MCF 10A (cell line): ENCODE measurements at regions of chr2 and their contacts with region 1.

Region 1: GRCh38 chr2:71798266-71799012 is 345.1 kb downstream of the DYSF start:
- DNase-seq: peak; percentile 61
- H3K4me3 Mint-ChIP-seq: no peak overlapping the region
- H3K27ac Mint-ChIP-seq: no peak overlapping the region
- H3K4me1 Mint-ChIP-seq: no peaks in the 10 kb centered on the region
- H3K27me3 Mint-ChIP-seq: no peaks in the 10 kb centered on the region
- CTCF ChIP-seq: peak; percentile 72

Region 2: GRCh38 chr2:71410696-71411095 is 387.7 kb before region 1 on chr2:
- CTCF ChIA-PET with region 1: no interaction called
- POLR2A ChIA-PET with region 1: no interaction called
- intact Hi-C with region 1: no loop called
- DNase-seq: no peak
- H3K4me3 Mint-ChIP-seq: no peak overlapping the region
- H3K27ac Mint-ChIP-seq: no peak overlapping the region
- H3K4me1 Mint-ChIP-seq: no peaks in the 10 kb centered on the region
- H3K27me3 Mint-ChIP-seq: no peaks in the 10 kb centered on the region
- CTCF ChIP-seq: no peak

Region 3: DNA sequence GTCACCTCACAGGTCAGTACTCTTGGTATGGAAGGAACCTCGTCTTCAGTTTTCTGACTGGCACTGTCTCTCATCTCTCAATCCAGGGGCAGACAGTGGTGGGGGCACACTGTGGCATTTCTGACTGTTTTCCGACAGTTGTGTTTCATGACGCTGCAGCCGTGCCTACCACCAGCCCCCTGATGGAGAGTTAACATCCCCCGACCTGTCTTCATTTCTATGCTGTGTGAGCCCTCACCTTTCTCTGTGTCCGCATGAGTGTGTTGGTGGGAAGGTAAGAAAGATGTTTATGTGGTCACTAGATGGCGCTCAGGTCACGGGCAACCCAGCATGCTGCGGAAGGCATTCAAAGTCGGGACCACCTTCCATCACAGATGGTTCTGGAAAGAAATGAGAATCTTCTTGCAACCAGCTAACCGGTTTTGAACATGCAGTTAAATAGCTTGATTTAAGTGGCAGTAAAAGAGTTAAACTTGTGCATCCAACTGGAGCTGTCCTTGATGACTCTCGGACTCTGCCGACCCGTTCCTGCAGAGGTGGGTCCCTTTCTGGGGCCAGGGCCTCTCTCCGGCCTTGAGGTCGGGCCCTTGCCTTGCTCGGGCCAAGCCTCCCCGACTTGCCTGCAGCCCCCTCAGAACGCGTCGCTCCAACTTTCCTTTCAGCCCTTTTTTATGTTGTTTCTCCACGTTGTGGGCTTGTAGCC is 252.7 kb before region 1 on chr2:
- CTCF ChIA-PET with region 1: interaction called, 28 read pairs
- POLR2A ChIA-PET with region 1: no interaction called
- intact Hi-C with region 1: loop called (anchors 1 kb)
- DNase-seq: peak; percentile 63
- H3K4me3 Mint-ChIP-seq: no peak overlapping the region
- H3K27ac Mint-ChIP-seq: no peak overlapping the region
- H3K4me1 Mint-ChIP-seq: peaks cover 5% of the 10 kb centered on the region
- H3K27me3 Mint-ChIP-seq: peaks cover 29% of the 10 kb centered on the region
- CTCF ChIP-seq: peak; percentile 83

Region 4: GRCh38 chr2:71609958-71610357 is 188.5 kb before region 1 on chr2:
- CTCF ChIA-PET with region 1: interaction called, 60 read pairs
- POLR2A ChIA-PET with region 1: no interaction called
- intact Hi-C with region 1: loop called (anchors 1 kb)
- DNase-seq: peak; percentile 33
- H3K4me3 Mint-ChIP-seq: no peak overlapping the region
- H3K27ac Mint-ChIP-seq: no peak overlapping the region
- H3K4me1 Mint-ChIP-seq: peaks cover 5% of the 10 kb centered on the region
- H3K27me3 Mint-ChIP-seq: peaks cover 47% of the 10 kb centered on the region
- CTCF ChIP-seq: peak; percentile 23

Region 5: GRCh38 chr2:71813807-71814470 is 15.5 kb after region 1 on chr2:
- CTCF ChIA-PET with region 1: interaction called, 22 read pairs
- POLR2A ChIA-PET with region 1: interaction called, 3 read pairs
- intact Hi-C with region 1: no loop called
- DNase-seq: no peak
- H3K4me3 Mint-ChIP-seq: no peak overlapping the region
- H3K27ac Mint-ChIP-seq: no peak overlapping the region
- H3K4me1 Mint-ChIP-seq: no peaks in the 10 kb centered on the region
- H3K27me3 Mint-ChIP-seq: peaks cover 43% of the 10 kb centered on the region
- CTCF ChIP-seq: no peak

Region 6: GRCh38 chr2:71882949-71883472 is 84.6 kb after region 1 on chr2:
- CTCF ChIA-PET with region 1: no interaction called
- POLR2A ChIA-PET with region 1: no interaction called
- intact Hi-C with region 1: no loop called
- DNase-seq: peak; percentile 97
- H3K4me3 Mint-ChIP-seq: peak overlapping the region; percentile 2
- H3K27ac Mint-ChIP-seq: no peak overlapping the region
- H3K4me1 Mint-ChIP-seq: peaks cover 40% of the 10 kb centered on the region
- H3K27me3 Mint-ChIP-seq: peaks cover under 1% of the 10 kb centered on the region
- CTCF ChIP-seq: no peak

Region 7: DNA sequence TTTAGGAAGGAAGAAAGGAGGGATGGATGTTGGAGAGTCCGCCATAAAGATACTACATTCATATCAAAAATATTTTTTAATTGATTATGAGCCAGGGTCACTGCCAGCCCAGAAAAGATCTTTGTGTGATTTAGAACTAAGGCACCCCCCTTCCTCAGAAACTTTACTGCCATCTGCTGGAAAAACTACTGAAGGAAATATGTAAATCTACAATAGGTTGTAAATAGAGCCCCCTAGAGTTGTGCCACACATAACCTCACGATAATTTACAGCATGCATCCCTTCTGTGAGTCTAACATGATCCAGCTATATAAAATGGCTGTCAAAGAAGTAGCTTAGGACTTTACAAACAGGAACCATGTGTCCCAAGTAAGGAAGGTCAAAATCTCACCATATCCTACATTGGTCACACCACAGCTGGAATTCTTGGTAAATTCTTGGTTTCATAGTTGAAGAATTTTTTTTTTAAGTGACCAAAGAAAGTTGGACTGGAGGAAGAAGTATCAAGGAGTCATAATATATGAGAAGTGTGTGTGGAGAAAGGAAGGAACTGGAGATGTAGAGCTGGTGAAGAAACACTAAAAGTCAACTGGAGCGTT is 196.7 kb after region 1 on chr2:
- CTCF ChIA-PET with region 1: interaction called, 10 read pairs
- POLR2A ChIA-PET with region 1: no interaction called
- intact Hi-C with region 1: loop called (anchors 1 kb)
- DNase-seq: peak; percentile 69
- H3K4me3 Mint-ChIP-seq: no peak overlapping the region
- H3K27ac Mint-ChIP-seq: no peak overlapping the region
- H3K4me1 Mint-ChIP-seq: no peaks in the 10 kb centered on the region
- H3K27me3 Mint-ChIP-seq: no peaks in the 10 kb centered on the region
- CTCF ChIP-seq: peak; percentile 64